IMR-90 (cell line): ENCODE measurements at regions of chr1 and their contacts with region 1.

Region 1: DNA sequence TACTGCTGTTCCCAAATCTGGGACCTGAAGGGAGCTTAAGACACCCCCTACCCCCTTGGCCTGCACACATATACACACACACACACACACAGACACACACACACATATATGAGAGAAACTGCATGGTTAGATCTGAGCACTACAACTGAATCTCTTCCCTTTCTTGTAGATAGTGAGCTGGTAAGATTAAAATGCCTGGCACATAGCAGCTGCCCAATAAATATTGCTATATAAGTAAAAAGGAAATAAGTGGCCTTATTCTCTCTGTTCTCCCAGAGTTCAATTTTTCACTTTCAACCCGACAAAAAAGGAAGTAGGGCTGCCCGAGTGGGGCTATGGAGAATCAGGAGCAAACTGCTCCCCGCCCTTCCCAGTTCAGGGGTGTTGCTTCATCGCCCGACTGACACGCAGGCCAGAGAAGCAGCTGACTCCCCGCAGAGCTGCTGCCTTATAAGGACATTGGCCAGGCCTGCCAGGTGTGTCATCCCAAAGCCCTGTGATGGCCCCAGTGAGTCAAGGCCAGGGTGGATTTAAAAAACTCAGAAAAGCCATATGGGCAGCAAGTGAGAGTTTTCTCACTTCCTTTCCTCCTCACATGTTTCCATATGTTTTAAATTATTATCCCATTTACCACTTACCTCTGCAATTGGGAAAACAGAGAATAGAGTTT is 106.5 kb upstream of the SLC44A3 start:
- DNase-seq: peak; percentile 99
- ATAC-seq: peak; percentile 88
- H3K4me3 ChIP-seq: no peak overlapping the region
- H3K27ac ChIP-seq: peak overlapping the region; percentile 81
- H3K4me1 ChIP-seq: peaks cover 23% of the 10 kb centered on the region
- H3K27me3 ChIP-seq: no peaks in the 10 kb centered on the region
- CTCF ChIP-seq: no peak
- POLR2A ChIP-seq: no peak
- RAD21 ChIP-seq: no peak

Region 2: GRCh38 chr1:94648225-94649007 is 65.2 kb before region 1 on chr1:
- CTCF ChIA-PET with region 1: no interaction called
- POLR2A ChIA-PET with region 1: no interaction called
- dilution Hi-C with region 1: no loop called
- in situ Hi-C with region 1: no loop called
- intact Hi-C with region 1: loop called (anchors 5 kb)
- DNase-seq: peak; percentile 100
- ATAC-seq: peak; percentile 77
- H3K4me3 ChIP-seq: no peak overlapping the region
- H3K27ac ChIP-seq: peak overlapping the region; percentile 99
- H3K4me1 ChIP-seq: peaks cover 25% of the 10 kb centered on the region
- H3K27me3 ChIP-seq: no peaks in the 10 kb centered on the region
- CTCF ChIP-seq: no peak
- POLR2A ChIP-seq: no peak
- RAD21 ChIP-seq: peak; percentile 12; the same call in 1 of the 2 replicates

Region 3: GRCh38 chr1:94783342-94784264 is 70.0 kb after region 1 on chr1:
- CTCF ChIA-PET with region 1: no interaction called
- POLR2A ChIA-PET with region 1: no interaction called
- dilution Hi-C with region 1: no loop called
- in situ Hi-C with region 1: no loop called
- intact Hi-C with region 1: no loop called
- DNase-seq: peak; percentile 94
- ATAC-seq: peak; percentile 95
- H3K4me3 ChIP-seq: no peak overlapping the region
- H3K27ac ChIP-seq: peak overlapping the region; percentile 73
- H3K4me1 ChIP-seq: peaks cover 10% of the 10 kb centered on the region
- H3K27me3 ChIP-seq: peaks cover 11% of the 10 kb centered on the region
- CTCF ChIP-seq: no peak
- POLR2A ChIP-seq: no peak
- RAD21 ChIP-seq: peak; percentile 48

Region 4: GRCh38 chr1:96538111-96538641 is 1824.6 kb after region 1 on chr1:
- CTCF ChIA-PET with region 1: no interaction called
- POLR2A ChIA-PET with region 1: no interaction called
- dilution Hi-C with region 1: no loop called
- in situ Hi-C with region 1: no loop called
- intact Hi-C with region 1: no loop called
- DNase-seq: peak; percentile 68
- ATAC-seq: peak; percentile 58
- H3K4me3 ChIP-seq: no peak overlapping the region
- H3K27ac ChIP-seq: peak overlapping the region; percentile 64; the same call in 1 of the 2 replicates
- H3K4me1 ChIP-seq: peaks cover 8% of the 10 kb centered on the region
- H3K27me3 ChIP-seq: no peaks in the 10 kb centered on the region
- CTCF ChIP-seq: no peak
- POLR2A ChIP-seq: no peak
- RAD21 ChIP-seq: no peak